B cell (primary cell): ENCODE measurements at regions of chr12 and their contacts with region 1.

Region 1: GRCh38 chr12:8544295-8544694 is 3.6 kb upstream of the CLEC4E start:
- DNase-seq: peak; percentile 72
- ATAC-seq: peak; percentile 66
- H3K4me3 ChIP-seq: no peak overlapping the region
- H3K4me3 Mint-ChIP-seq: no peak overlapping the region
- H3K27ac ChIP-seq: no peak overlapping the region
- H3K27ac Mint-ChIP-seq: no peak overlapping the region
- H3K4me1 ChIP-seq: no peaks in the 10 kb centered on the region
- H3K4me1 Mint-ChIP-seq: peaks cover 6% of the 10 kb centered on the region
- H3K27me3 ChIP-seq: peaks cover 0 to 7% (median 3%) of the 10 kb centered on the region in 4 experiments
- H3K27me3 Mint-ChIP-seq: peaks cover 23% of the 10 kb centered on the region
- CTCF ChIP-seq: peak; percentile 100

Region 2: GRCh38 chr12:8491646-8492530 is 52.4 kb before region 1 on chr12:
- CTCF ChIA-PET with region 1: interaction called, 11 read pairs
- POLR2A ChIA-PET with region 1: no interaction called
- intact Hi-C with region 1: no loop called
- DNase-seq: no peak
- ATAC-seq: no peak
- H3K4me3 ChIP-seq: no peak overlapping the region
- H3K4me3 Mint-ChIP-seq: no peak overlapping the region
- H3K27ac ChIP-seq: no peak overlapping the region
- H3K27ac Mint-ChIP-seq: no peak overlapping the region
- H3K4me1 ChIP-seq: peaks cover 3 to 7% of the 10 kb centered on the region in 2 donors
- H3K4me1 Mint-ChIP-seq: peaks cover 9% of the 10 kb centered on the region
- H3K27me3 ChIP-seq: peaks cover 0 to 16% (median 6%) of the 10 kb centered on the region in 4 experiments
- H3K27me3 Mint-ChIP-seq: peaks cover 35% of the 10 kb centered on the region
- CTCF ChIP-seq: no peak

Region 3: DNA sequence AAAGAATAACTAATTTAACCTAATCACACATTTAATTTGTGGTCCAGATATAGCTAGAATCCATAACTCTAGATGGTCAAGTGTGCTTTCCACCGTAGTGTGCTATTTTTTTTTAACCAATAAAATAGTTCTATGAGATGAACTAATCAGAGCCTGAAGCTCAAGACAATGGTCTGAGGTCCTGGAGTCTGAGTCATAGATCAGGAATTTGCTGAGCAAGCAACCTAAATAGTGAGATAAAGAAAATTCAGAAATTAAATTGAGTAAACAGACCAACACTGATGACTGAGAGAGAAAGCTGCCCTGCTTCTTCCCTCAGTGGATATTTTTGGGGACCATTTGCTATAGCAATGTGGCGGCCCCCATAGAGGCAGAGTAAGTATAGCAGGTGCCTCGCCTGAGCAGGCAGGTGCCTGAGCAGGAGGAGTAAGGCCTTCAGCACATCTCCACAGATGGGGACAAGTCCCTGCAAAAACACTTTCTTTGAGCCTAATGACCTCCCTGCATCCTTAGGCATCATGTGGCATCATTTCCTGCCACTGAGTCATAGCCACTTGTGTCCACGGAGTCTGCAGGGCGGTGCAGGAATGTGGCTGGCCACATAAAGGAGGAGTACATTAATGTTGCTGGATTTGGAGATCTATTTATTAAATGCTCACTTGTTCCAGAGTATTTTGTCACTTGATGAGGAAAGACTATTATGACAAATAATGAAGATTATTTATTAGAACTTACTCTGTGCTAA is 10.3 kb after region 1 on chr12:
- CTCF ChIA-PET with region 1: interaction called, 28 read pairs
- POLR2A ChIA-PET with region 1: no interaction called
- intact Hi-C with region 1: no loop called
- DNase-seq: no peak
- ATAC-seq: no peak
- H3K4me3 ChIP-seq: no peak overlapping the region
- H3K4me3 Mint-ChIP-seq: no peak overlapping the region
- H3K27ac ChIP-seq: no peak overlapping the region
- H3K27ac Mint-ChIP-seq: no peak overlapping the region
- H3K4me1 ChIP-seq: no peaks in the 10 kb centered on the region
- H3K4me1 Mint-ChIP-seq: no peaks in the 10 kb centered on the region
- H3K27me3 ChIP-seq: no peaks in the 10 kb centered on the region
- H3K27me3 Mint-ChIP-seq: no peaks in the 10 kb centered on the region
- CTCF ChIP-seq: no peak

Region 4: GRCh38 chr12:8780389-8780788 is 236.1 kb after region 1 on chr12:
- CTCF ChIA-PET with region 1: no interaction called
- POLR2A ChIA-PET with region 1: no interaction called
- intact Hi-C with region 1: no loop called
- DNase-seq: no peak
- ATAC-seq: no peak
- H3K4me3 ChIP-seq: no peak overlapping the region
- H3K4me3 Mint-ChIP-seq: no peak overlapping the region
- H3K27ac ChIP-seq: no peak overlapping the region
- H3K27ac Mint-ChIP-seq: no peak overlapping the region
- H3K4me1 ChIP-seq: no peaks in the 10 kb centered on the region
- H3K4me1 Mint-ChIP-seq: no peaks in the 10 kb centered on the region
- H3K27me3 ChIP-seq: no peaks in the 10 kb centered on the region
- H3K27me3 Mint-ChIP-seq: no peaks in the 10 kb centered on the region
- CTCF ChIP-seq: no peak

Region 5: GRCh38 chr12:8860165-8860961 is 316.1 kb after region 1 on chr12:
- CTCF ChIA-PET with region 1: interaction called, 12 read pairs
- POLR2A ChIA-PET with region 1: no interaction called
- intact Hi-C with region 1: loop called (anchors 1 kb)
- DNase-seq: peak; percentile 44
- ATAC-seq: no peak
- H3K4me3 ChIP-seq: no peak overlapping the region
- H3K4me3 Mint-ChIP-seq: no peak overlapping the region
- H3K27ac ChIP-seq: no peak overlapping the region
- H3K27ac Mint-ChIP-seq: no peak overlapping the region
- H3K4me1 ChIP-seq: no peaks in the 10 kb centered on the region
- H3K4me1 Mint-ChIP-seq: no peaks in the 10 kb centered on the region
- H3K27me3 ChIP-seq: no peaks in the 10 kb centered on the region
- H3K27me3 Mint-ChIP-seq: peaks cover 12% of the 10 kb centered on the region
- CTCF ChIP-seq: peak; percentile 63

Region 6: GRCh38 chr12:9049520-9050133 is 505.3 kb after region 1 on chr12:
- CTCF ChIA-PET with region 1: interaction called, 22 read pairs
- POLR2A ChIA-PET with region 1: no interaction called
- intact Hi-C with region 1: no loop called
- DNase-seq: peak; percentile 53
- ATAC-seq: peak; percentile 41
- H3K4me3 ChIP-seq: no peak overlapping the region
- H3K4me3 Mint-ChIP-seq: no peak overlapping the region
- H3K27ac ChIP-seq: no peak overlapping the region
- H3K27ac Mint-ChIP-seq: no peak overlapping the region
- H3K4me1 ChIP-seq: no peaks in the 10 kb centered on the region
- H3K4me1 Mint-ChIP-seq: no peaks in the 10 kb centered on the region
- H3K27me3 ChIP-seq: no peaks in the 10 kb centered on the region
- H3K27me3 Mint-ChIP-seq: peaks cover 10% of the 10 kb centered on the region
- CTCF ChIP-seq: peak; percentile 75